B cell (primary cell): ENCODE measurements at regions of chr9 and their contacts with region 1.

Region 1: DNA sequence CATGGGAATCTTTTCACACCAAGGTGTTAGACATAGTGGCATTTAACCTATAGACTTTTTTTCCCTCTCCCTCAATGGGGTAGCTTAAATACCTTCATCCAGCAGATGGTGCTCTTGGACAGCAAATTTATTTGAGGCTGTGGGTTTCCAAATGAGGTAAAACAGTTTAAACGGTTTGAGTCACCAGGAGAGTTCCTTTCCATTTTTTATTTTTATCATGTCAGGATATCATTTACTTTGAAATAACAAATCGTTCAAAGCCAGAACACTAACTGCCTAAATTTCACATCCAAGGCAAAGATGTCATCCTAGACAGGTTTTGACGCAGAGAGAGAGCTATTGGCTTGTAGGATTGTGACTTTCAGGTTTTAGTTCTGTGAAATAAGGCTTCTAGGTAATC is 69.7 kb downstream of the KDM4C start:
- DNase-seq: peak; percentile 56
- ATAC-seq: peak; percentile 49
- H3K4me3 ChIP-seq: no peak overlapping the region
- H3K4me3 Mint-ChIP-seq: no peak overlapping the region
- H3K27ac ChIP-seq: peak overlapping the region in 1 of 2 donors; percentile 17
- H3K27ac Mint-ChIP-seq: peak overlapping the region; percentile 63
- H3K4me1 ChIP-seq: no peaks in the 10 kb centered on the region
- H3K4me1 Mint-ChIP-seq: peaks cover 12% of the 10 kb centered on the region
- H3K27me3 ChIP-seq: no peaks in the 10 kb centered on the region
- H3K27me3 Mint-ChIP-seq: no peaks in the 10 kb centered on the region
- CTCF ChIP-seq: peak; percentile 70

Region 2: DNA sequence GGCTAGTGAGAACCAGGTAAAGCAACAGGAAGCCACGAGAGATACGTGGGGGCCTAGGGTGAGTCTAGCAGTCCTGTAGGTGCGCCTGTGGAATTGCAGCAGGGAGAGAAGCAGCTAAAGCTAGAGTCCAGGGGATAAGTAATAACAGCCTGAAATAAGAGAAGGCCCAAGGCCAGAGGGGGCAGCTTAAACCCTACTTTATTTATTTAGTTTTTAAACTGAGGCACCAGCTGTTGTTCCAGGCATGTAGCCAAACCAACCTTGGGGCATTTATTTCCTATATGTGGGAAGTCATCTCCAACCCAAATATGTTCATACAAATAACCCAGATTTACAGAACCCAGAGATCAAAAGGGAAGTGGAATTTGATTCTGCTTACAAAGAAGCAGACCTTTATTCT is 275.4 kb before region 1 on chr9:
- CTCF ChIA-PET with region 1: no interaction called
- POLR2A ChIA-PET with region 1: no interaction called
- intact Hi-C with region 1: no loop called
- DNase-seq: no peak
- ATAC-seq: no peak
- H3K4me3 ChIP-seq: no peak overlapping the region
- H3K4me3 Mint-ChIP-seq: no peak overlapping the region
- H3K27ac ChIP-seq: no peak overlapping the region
- H3K27ac Mint-ChIP-seq: no peak overlapping the region
- H3K4me1 ChIP-seq: no peaks in the 10 kb centered on the region
- H3K4me1 Mint-ChIP-seq: no peaks in the 10 kb centered on the region
- H3K27me3 ChIP-seq: no peaks in the 10 kb centered on the region
- H3K27me3 Mint-ChIP-seq: no peaks in the 10 kb centered on the region
- CTCF ChIP-seq: no peak

Region 3: DNA sequence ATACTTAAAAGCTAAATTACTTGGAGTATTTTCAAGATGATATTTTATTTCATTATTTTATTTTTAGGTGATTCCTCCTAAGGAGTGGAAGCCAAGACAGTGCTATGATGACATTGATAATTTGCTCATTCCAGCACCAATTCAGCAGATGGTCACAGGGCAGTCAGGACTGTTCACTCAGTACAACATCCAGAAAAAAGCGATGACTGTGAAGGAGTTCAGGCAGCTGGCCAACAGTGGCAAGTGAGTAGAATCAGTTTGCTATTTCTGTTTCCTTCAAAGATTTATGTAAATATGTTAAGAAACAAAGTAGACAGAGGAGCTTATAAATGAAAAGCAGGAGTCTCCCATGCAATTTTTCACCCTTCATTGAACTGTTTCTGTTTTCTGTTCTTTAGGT is 21.9 kb before region 1 on chr9:
- CTCF ChIA-PET with region 1: no interaction called
- POLR2A ChIA-PET with region 1: no interaction called
- intact Hi-C with region 1: no loop called
- DNase-seq: no peak
- ATAC-seq: no peak
- H3K4me3 ChIP-seq: no peak overlapping the region
- H3K4me3 Mint-ChIP-seq: no peak overlapping the region
- H3K27ac ChIP-seq: peak overlapping the region in 1 of 2 donors; percentile 11
- H3K27ac Mint-ChIP-seq: no peak overlapping the region
- H3K4me1 ChIP-seq: no peaks in the 10 kb centered on the region
- H3K4me1 Mint-ChIP-seq: no peaks in the 10 kb centered on the region
- H3K27me3 ChIP-seq: no peaks in the 10 kb centered on the region
- H3K27me3 Mint-ChIP-seq: no peaks in the 10 kb centered on the region
- CTCF ChIP-seq: no peak

Region 4: DNA sequence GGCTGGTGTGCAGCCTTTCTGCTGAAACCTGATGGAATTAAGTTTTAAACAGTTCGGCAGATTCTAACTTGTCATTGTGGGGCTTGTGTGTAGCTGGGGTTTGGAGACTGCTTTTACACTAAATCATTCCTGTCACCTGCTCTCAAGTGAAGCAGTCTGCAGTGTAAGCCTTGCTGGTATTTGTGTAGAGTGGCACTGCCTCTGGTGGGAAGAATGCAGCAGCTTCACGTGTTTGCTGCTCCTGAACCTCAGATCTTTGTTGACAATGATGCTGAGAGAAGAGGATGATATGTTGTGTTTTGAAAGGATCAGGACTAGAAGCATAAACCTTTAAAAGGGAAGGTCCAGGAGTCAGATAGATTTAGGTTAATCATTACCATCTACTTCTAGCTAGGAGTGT is 18.4 kb after region 1 on chr9:
- CTCF ChIA-PET with region 1: interaction called, 12 read pairs
- POLR2A ChIA-PET with region 1: no interaction called
- intact Hi-C with region 1: no loop called
- DNase-seq: no peak
- ATAC-seq: no peak
- H3K4me3 ChIP-seq: no peak overlapping the region
- H3K4me3 Mint-ChIP-seq: no peak overlapping the region
- H3K27ac ChIP-seq: no peak overlapping the region
- H3K27ac Mint-ChIP-seq: no peak overlapping the region
- H3K4me1 ChIP-seq: no peaks in the 10 kb centered on the region
- H3K4me1 Mint-ChIP-seq: peaks cover 24% of the 10 kb centered on the region
- H3K27me3 ChIP-seq: no peaks in the 10 kb centered on the region
- H3K27me3 Mint-ChIP-seq: no peaks in the 10 kb centered on the region
- CTCF ChIP-seq: no peak

Region 5: DNA sequence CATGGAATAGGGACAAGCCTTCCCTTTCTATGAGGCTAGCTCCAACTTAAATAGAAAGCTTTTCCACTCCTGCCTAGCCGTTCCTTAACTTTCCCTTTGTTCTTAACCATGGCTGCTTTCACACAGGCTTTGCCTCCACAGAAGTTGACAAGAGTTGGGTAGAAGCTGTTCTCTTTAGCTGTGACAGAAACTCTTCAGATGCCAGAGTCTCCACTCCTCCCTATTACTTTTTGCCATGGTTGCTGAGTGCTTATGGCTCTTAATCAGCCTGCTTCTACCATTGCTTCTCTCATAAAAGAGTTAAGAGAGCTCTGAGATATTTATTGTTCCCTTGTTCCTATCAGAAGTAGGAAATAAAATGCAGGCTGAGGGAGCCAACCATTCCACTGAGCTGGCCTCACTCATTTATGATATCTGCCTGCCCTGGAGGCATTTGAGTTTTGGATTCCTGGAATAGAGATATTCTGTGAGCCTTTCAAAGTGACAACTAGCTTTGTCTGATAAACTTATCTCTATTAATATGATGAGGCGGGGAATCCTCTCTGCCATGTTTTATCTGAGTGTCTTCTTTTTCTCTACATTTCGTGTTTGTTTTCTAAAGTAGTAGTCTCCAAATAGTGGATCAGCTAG is 809.5 kb after region 1 on chr9:
- CTCF ChIA-PET with region 1: no interaction called
- POLR2A ChIA-PET with region 1: no interaction called
- intact Hi-C with region 1: no loop called
- DNase-seq: no peak
- ATAC-seq: no peak
- H3K4me3 ChIP-seq: no peak overlapping the region
- H3K4me3 Mint-ChIP-seq: no peak overlapping the region
- H3K27ac ChIP-seq: no peak overlapping the region
- H3K27ac Mint-ChIP-seq: no peak overlapping the region
- H3K4me1 ChIP-seq: no peaks in the 10 kb centered on the region
- H3K4me1 Mint-ChIP-seq: no peaks in the 10 kb centered on the region
- H3K27me3 ChIP-seq: no peaks in the 10 kb centered on the region
- H3K27me3 Mint-ChIP-seq: no peaks in the 10 kb centered on the region
- CTCF ChIP-seq: no peak